Calu3 (cell line): ENCODE measurements at regions of chr15 and their contacts with region 1.

Region 1: DNA sequence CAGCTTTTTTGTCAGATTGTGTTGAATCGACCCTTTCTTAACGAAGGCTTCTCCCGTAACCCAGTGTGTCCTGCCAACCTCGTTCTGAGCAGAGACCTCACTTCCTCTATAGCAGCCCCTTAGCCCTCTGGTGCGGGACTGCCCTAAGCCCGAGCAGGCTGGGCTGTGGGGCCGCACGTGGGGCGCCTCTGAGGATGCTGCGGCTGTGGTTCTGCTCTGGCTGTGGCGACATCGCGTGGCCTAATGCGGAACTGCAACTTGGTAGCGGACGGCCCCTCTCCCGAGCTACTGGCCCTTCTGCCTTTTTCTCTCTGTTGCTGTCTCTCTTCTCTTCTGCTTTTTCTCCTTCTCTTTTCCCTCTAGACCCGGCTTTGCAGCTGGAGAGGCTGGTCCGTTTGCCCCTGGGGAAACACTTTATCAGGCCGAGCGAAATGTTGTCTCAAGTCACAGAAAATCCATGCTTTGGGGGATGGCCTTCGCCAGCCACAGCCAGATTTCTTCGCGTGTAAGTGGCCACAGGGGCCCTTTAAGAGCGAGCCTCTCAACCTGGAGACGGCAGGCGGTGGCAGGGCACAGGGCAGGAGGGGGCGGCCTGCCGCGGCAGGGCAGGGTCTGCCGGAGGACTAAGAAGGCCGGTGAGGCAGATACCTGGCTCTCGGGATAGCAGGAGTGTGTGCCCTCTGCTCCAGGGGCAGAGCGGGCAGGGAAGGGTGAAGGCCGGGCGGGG is 19.4 kb upstream of the KIF23 start:
- DNase-seq: peak; percentile 92
- H3K4me3 Mint-ChIP-seq: no peak overlapping the region
- H3K27ac Mint-ChIP-seq: no peak overlapping the region
- H3K4me1 Mint-ChIP-seq: peaks cover 29% of the 10 kb centered on the region
- H3K27me3 Mint-ChIP-seq: no peaks in the 10 kb centered on the region
- CTCF ChIP-seq: peak; percentile 95

Region 2: DNA sequence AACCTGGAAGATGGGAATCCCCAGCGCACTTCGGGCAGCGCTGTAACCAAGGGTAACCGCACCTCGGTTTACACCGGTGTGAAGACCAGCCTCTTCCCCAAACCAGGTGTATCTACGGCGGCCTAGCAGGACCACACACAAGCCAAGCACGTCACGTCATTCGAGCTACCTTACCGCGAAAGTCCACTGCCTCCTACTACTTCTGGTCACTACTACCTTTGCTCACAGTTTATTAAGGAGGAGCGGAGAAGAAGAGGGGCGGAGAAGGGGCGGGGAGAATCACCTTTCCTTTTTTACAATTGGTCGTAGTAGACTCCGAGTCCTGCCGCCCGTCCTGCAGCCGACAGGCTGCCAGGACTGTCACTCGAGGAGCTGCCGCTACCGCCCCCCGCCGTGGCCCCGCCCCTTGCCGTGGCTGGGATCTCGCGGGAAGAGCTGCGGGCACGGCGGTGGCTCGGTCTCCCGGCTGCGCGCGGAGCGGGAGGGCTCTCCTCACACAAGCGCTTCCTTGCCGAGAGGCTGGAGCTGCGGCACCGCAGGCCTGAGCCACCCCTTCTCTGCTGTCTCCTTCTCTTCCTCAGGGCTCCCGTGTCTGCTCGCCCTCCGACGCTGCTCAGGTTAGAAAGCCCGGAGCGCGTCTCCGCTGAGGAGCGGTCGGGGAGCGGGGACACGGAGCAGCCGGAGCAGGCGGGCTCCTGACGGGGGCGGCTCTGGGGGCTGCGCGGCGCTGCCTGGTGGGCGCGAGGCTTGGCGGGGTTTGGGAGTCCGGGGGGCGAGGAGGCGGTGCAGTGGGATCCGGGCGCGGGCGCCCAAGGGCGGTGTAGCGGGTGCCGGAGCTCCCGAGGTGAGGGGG is 234.4 kb before region 1 on chr15 and contains the start of gene GLCE:
- CTCF ChIA-PET with region 1: interaction called, 5 read pairs
- intact Hi-C with region 1: loop called (anchors 10 kb)
- DNase-seq: peak; percentile 99
- H3K4me3 Mint-ChIP-seq: peak within 1 kb of the TSS; percentile 96
- H3K27ac Mint-ChIP-seq: peak within 1 kb of the TSS; percentile 89
- H3K4me1 Mint-ChIP-seq: peaks cover 29% of the 10 kb centered on the region
- H3K27me3 Mint-ChIP-seq: no peaks in the 10 kb centered on the region
- CTCF ChIP-seq: no peak
- total RNA-seq, gene GLCE: 20.4 and 22.4 TPM in 2 replicates

Region 3: GRCh38 chr15:69265347-69265955 is 129.3 kb before region 1 on chr15:
- CTCF ChIA-PET with region 1: interaction called, 3 read pairs
- intact Hi-C with region 1: loop called (anchors 1 kb)
- DNase-seq: no peak
- H3K4me3 Mint-ChIP-seq: no peak overlapping the region
- H3K27ac Mint-ChIP-seq: no peak overlapping the region
- H3K4me1 Mint-ChIP-seq: no peaks in the 10 kb centered on the region
- H3K27me3 Mint-ChIP-seq: no peaks in the 10 kb centered on the region
- CTCF ChIP-seq: peak; percentile 32

Region 4: DNA sequence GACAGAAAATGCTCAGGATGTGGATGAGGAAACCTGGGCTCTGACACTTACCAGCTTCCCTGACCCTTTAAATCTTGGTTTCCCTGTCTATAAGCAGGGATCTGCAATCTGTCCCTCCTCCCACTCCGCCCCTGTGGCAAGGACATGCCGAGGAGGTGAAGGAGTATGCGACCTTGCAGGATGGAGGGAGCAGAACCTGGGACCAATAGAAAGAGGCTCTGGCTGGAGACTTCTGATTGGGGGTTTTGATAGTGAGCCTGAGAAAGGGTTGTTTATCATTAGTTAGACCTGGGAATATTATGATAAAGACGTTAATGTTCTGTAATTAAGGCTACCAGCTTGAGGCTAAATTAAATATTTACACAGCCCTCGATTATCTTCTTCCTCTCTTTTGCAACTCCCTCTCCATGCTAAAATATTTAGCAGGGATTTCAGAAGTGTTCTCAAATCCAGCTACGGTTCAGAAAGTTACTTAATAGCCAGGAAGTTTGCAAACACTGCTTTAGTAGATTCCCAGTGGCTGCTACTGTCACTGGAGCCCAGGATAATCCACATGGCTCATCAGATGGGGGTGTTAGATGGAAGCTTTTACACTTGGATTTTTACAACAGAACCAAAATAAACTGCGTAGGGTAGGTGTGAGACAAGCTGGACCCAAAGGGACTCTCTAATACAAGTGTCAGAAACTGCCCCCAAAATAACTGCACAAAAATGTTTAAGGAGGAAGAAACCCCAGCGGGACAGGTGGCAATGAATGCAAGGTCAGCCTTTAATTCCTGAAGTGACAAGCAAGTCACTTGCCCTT is 105.2 kb before region 1 on chr15:
- CTCF ChIA-PET with region 1: no interaction called
- intact Hi-C with region 1: loop called (anchors 5 kb)
- DNase-seq: no peak
- H3K4me3 Mint-ChIP-seq: no peak overlapping the region
- H3K27ac Mint-ChIP-seq: no peak overlapping the region
- H3K4me1 Mint-ChIP-seq: no peaks in the 10 kb centered on the region
- H3K27me3 Mint-ChIP-seq: peaks cover 47% of the 10 kb centered on the region
- CTCF ChIP-seq: no peak